PC-3 (cell line): ENCODE measurements at regions of chr14 and their contacts with region 1.

Region 1: DNA sequence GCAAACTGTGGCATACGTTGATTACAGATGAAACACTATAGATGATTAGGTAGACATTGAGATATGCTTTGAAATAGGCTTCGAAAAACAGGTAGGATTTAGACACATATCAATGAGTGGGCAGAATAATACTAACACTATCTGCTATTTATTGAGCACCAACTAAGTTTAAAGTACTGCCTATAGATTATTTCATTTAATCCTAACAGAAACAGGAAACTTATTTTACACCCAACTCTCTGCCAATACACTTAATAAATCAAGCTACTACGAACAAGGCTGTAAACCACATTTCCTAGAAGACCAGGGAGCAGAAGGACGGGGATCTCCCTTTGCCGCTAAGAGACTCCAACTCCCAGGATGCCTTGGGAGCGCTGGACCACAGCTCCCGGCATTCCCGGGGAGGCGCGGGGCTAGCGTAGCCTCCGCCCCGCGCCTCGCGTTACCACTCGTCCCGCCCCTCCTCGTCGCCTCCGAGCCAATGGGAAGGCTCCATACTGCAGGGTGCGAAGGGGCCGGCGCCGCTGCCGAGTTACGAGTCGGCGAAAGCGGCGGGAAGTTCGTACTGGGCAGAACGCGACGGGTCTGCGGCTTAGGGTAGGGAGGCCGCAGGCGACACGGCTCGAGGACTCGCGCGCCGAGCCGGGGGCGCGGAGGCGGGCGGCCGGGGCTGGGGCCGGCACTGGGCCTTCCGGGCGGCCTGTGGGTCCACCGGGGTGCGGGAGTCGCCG is at the start of gene VRK1:
- DNase-seq: peak; percentile 97
- ATAC-seq: peak; percentile 98
- H3K4me3 ChIP-seq: peak within 1 kb of the TSS; percentile 90
- H3K27ac ChIP-seq: peak within 1 kb of the TSS; percentile 34; the same call in 1 of the 2 replicates
- H3K4me1 ChIP-seq: peaks cover 24% of the 10 kb centered on the region
- H3K27me3 ChIP-seq: no peaks in the 10 kb centered on the region
- CTCF ChIP-seq: no peak
- total RNA-seq, gene VRK1: 39.1 and 46.7 TPM in 2 replicates

Region 2: DNA sequence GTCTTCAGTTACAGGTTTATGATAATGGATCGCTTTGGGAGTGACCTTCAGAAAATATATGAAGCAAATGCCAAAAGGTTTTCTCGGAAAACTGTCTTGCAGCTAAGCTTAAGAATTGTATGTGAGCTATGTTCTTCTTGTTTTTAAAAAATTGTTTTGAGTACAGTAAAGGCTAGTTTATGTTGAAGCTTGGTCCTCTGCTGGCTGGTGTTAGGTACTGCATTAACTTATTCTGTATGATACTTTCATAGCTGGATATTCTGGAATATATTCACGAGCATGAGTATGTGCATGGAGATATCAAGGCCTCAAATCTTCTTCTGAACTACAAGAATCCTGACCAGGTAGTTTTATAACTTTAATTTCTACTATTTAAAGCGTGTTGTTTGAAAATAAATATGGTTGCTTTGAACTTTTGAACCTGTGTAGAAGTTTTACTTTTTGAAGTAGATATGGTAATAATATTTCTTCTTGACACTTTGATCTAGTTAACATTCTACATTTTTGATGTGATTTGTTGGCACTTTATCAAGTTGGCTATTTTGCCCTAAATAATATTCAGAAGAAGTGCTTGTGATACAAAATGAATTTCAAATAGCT is 55.9 kb after region 1 on chr14:
- CTCF ChIA-PET with region 1: interaction called, 3 read pairs
- POLR2A ChIA-PET with region 1: no interaction called
- intact Hi-C with region 1: loop called (anchors 5 kb)
- DNase-seq: peak; percentile 52
- ATAC-seq: peak; percentile 70
- H3K4me3 ChIP-seq: no peak overlapping the region
- H3K27ac ChIP-seq: no peak overlapping the region
- H3K4me1 ChIP-seq: peaks cover 13% of the 10 kb centered on the region
- H3K27me3 ChIP-seq: no peaks in the 10 kb centered on the region
- CTCF ChIP-seq: peak; percentile 80

Region 3: DNA sequence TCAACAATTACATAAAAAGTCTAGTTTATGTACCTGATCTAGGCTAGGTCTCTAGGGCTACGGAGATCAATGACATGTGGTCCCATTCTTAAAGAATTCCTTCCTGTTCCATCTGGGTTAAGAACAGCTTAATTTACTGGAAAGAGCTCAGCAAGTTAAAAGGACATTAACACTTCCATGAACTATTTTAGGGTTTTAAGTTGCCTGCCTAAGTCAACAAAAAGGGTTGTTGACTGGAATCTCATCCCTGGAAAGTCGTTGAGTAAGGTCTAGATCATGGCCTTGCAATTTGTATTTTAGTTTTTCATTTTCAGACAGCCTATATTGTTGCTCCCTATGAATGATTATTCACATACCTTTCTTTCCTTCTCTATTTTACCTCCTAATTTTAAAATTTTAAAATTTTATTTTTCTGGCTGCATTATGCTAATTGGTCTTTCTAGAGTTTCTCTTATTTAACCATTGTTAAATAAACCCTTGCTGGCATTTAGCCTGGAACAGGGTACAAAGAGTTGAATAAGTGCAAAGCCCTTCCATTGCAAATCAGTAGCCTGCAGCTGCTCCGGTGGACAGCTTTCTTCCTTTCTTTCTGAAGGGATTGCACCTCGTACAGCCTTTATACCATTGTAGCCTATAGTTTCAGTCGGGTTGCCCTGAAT is 66.4 kb after region 1 on chr14:
- CTCF ChIA-PET with region 1: no interaction called
- POLR2A ChIA-PET with region 1: no interaction called
- intact Hi-C with region 1: no loop called
- DNase-seq: no peak
- ATAC-seq: no peak
- H3K4me3 ChIP-seq: no peak overlapping the region
- H3K27ac ChIP-seq: no peak overlapping the region
- H3K4me1 ChIP-seq: peaks cover 15% of the 10 kb centered on the region
- H3K27me3 ChIP-seq: no peaks in the 10 kb centered on the region
- CTCF ChIP-seq: no peak

Region 4: DNA sequence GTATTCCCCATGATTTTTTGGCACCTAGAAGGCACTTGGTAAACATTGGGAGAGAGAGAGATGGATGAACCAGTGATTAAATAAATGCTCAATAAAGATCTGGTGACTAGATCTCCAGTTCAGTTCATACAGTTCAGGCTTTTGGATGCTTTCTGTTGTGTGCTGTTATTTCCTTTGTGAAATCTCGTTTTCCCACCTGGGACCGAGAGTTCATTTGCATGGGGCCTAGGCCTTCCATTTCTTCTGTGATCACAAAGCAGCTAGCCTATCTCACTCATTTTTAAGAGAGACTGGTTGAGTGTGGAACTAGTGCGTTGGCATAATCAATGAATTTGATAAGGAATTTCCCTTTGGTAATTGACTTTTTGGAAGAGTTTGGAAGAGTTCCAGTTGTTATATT is 104.2 kb after region 1 on chr14:
- CTCF ChIA-PET with region 1: no interaction called
- POLR2A ChIA-PET with region 1: no interaction called
- intact Hi-C with region 1: loop called (anchors 5 kb)
- DNase-seq: no peak
- ATAC-seq: no peak
- H3K4me3 ChIP-seq: no peak overlapping the region
- H3K27ac ChIP-seq: no peak overlapping the region
- H3K4me1 ChIP-seq: peaks cover 28% of the 10 kb centered on the region
- H3K27me3 ChIP-seq: no peaks in the 10 kb centered on the region
- CTCF ChIP-seq: no peak

Region 5: DNA sequence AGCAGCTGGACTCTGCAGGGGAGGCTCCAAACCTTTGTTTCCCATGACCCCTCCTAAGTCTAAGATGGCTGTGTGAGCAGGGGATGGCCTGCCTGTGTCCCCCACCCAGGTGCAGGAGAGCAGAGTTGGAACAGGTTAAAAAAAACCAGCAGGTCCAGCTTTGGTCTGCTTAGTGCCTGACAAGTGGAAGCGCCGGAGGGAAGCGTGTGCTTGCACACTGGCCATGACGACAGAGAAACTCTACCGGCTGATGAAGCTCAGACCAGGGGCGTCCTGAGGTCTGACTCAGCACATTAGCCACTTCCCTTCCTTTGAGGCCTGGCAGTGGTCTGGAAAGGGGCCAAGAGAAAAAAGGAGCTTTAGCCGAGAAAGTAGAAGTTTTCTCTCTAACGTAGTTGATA is 280.2 kb after region 1 on chr14:
- CTCF ChIA-PET with region 1: no interaction called
- POLR2A ChIA-PET with region 1: interaction called, 4 read pairs
- intact Hi-C with region 1: loop called (anchors 5 kb)
- DNase-seq: peak; percentile 97
- ATAC-seq: peak; percentile 90
- H3K4me3 ChIP-seq: peak overlapping the region; percentile 8; the same call in 1 of the 2 replicates
- H3K27ac ChIP-seq: peak overlapping the region; percentile 95
- H3K4me1 ChIP-seq: peaks cover 22% of the 10 kb centered on the region
- H3K27me3 ChIP-seq: no peaks in the 10 kb centered on the region
- CTCF ChIP-seq: no peak

Region 6: DNA sequence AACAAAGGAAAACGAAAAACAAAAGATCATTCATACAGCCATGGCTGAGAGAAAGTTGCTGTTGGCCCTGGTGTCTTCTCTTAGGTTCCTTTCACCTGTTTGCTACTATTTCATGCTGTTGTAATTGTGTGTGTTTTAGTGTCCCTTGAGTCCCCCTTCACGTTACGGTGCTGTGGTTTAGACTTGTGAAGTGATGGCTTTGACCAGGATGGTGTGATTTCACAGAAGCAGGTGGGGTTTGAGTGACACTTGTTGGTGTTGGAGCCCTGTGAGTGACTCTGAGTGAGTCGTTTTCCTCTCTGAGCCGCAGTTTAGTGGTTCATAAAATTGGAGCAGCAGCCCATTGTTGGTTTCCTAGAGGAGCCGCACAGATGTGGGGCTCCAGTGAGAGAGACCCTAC is 635.6 kb after region 1 on chr14:
- CTCF ChIA-PET with region 1: no interaction called
- POLR2A ChIA-PET with region 1: no interaction called
- intact Hi-C with region 1: no loop called
- DNase-seq: no peak
- ATAC-seq: no peak
- H3K4me3 ChIP-seq: no peak overlapping the region
- H3K27ac ChIP-seq: no peak overlapping the region
- H3K4me1 ChIP-seq: no peaks in the 10 kb centered on the region
- H3K27me3 ChIP-seq: peaks cover 69% of the 10 kb centered on the region
- CTCF ChIP-seq: no peak